ENCODE measurements at regions of chrX and their contacts with region 1.

Region 1: GRCh38 chrX:54044126-54044876 is at the start of gene PHF8:
- DNase-seq: peak; percentile 93
- ATAC-seq: peak; percentile 85
- H3K4me3 Mint-ChIP-seq: peak within 1 kb of the TSS; percentile 95
- H3K27ac Mint-ChIP-seq: peak within 1 kb of the TSS; percentile 96
- H3K4me1 Mint-ChIP-seq: peaks cover 12% of the 10 kb centered on the region
- H3K27me3 Mint-ChIP-seq: no peaks in the 10 kb centered on the region
- total RNA-seq, gene PHF8: 46.9 to 47.2 TPM

Region 2: GRCh38 chrX:54182864-54183608 is 138.7 kb after region 1 on chrX and contains the start of gene FAM120C:
- POLR2A ChIA-PET with region 1: interaction called, 30 read pairs
- DNase-seq: peak; percentile 68
- ATAC-seq: peak; percentile 52
- H3K4me3 Mint-ChIP-seq: peak within 1 kb of the TSS; percentile 84
- H3K27ac Mint-ChIP-seq: peak within 1 kb of the TSS; percentile 92
- H3K4me1 Mint-ChIP-seq: peaks cover 38% of the 10 kb centered on the region
- H3K27me3 Mint-ChIP-seq: no peaks in the 10 kb centered on the region
- total RNA-seq, gene FAM120C: 12.9 to 14.7 TPM